Calu3 (cell line): ENCODE measurements at regions of chr1 and their contacts with region 1.

Region 1: GRCh38 chr1:53945433-53946251 is at the start of gene IFT25:
- DNase-seq: peak; percentile 98
- H3K4me3 Mint-ChIP-seq: peak within 1 kb of the TSS; percentile 98
- H3K27ac Mint-ChIP-seq: peak within 1 kb of the TSS; percentile 80
- H3K4me1 Mint-ChIP-seq: peaks cover 23% of the 10 kb centered on the region
- H3K27me3 Mint-ChIP-seq: no peaks in the 10 kb centered on the region
- CTCF ChIP-seq: no peak
- total RNA-seq, gene IFT25: 25.8 and 30.0 TPM in 2 replicates

Region 2: DNA sequence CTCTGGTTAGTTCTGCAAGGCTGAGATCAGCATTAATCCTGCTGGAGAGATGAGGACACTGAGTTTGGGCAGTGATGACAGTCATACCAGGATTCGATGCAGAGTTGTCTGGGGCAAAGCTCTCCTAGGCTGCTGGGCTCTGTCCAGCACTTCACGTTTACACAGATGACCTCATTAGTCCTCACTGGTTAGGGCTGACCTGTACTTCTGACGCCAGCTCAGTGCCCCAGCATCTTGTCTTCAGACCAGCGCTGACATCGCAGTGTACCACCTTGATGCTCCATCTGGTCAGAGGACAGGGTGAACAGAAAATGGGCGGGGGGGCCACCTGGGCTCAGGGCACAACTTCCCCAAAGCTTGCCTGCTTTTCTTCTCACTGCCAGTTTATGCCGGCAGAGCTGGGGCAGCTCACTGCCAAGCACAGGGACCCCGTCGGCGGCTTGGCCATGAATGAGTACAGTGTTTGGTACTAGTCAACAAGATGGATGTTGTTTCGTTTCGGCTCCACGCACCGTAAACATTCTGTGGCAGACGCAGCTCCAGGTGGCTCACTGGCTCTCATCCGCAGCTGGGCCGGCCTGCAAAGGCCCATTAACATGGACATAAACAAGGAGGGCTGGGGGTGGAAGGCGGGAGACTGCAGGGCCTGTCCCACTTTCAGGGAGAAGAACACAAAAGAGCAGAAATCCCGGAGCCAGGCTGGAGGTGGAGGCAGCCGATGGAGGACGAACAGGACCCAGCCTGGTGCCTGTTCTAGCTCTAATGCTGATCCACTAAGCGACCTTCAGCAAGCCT is 325.4 kb before region 1 on chr1:
- CTCF ChIA-PET with region 1: no interaction called
- intact Hi-C with region 1: no loop called
- DNase-seq: no peak
- H3K4me3 Mint-ChIP-seq: no peak overlapping the region
- H3K27ac Mint-ChIP-seq: no peak overlapping the region
- H3K4me1 Mint-ChIP-seq: no peaks in the 10 kb centered on the region
- H3K27me3 Mint-ChIP-seq: peaks cover 40% of the 10 kb centered on the region
- CTCF ChIP-seq: no peak

Region 3: GRCh38 chr1:53860967-53861411 is 84.7 kb before region 1 on chr1:
- CTCF ChIA-PET with region 1: interaction called, 5 read pairs
- intact Hi-C with region 1: loop called (anchors 1 kb)
- DNase-seq: peak; percentile 45
- H3K4me3 Mint-ChIP-seq: no peak overlapping the region
- H3K27ac Mint-ChIP-seq: no peak overlapping the region
- H3K4me1 Mint-ChIP-seq: no peaks in the 10 kb centered on the region
- H3K27me3 Mint-ChIP-seq: no peaks in the 10 kb centered on the region
- CTCF ChIP-seq: peak; percentile 75

Region 4: GRCh38 chr1:53878492-53879105 is 67.0 kb before region 1 on chr1:
- CTCF ChIA-PET with region 1: interaction called, 6 read pairs
- intact Hi-C with region 1: loop called (anchors 1 kb)
- DNase-seq: no peak
- H3K4me3 Mint-ChIP-seq: no peak overlapping the region
- H3K27ac Mint-ChIP-seq: no peak overlapping the region
- H3K4me1 Mint-ChIP-seq: no peaks in the 10 kb centered on the region
- H3K27me3 Mint-ChIP-seq: no peaks in the 10 kb centered on the region
- CTCF ChIP-seq: peak; percentile 46

Region 5: GRCh38 chr1:53959664-53960250 is 14.1 kb after region 1 on chr1:
- CTCF ChIA-PET with region 1: interaction called, 22 read pairs
- intact Hi-C with region 1: no loop called
- DNase-seq: peak; percentile 26
- H3K4me3 Mint-ChIP-seq: no peak overlapping the region
- H3K27ac Mint-ChIP-seq: no peak overlapping the region
- H3K4me1 Mint-ChIP-seq: peaks cover 13% of the 10 kb centered on the region
- H3K27me3 Mint-ChIP-seq: no peaks in the 10 kb centered on the region
- CTCF ChIP-seq: peak; percentile 71

Region 6: GRCh38 chr1:53992085-53992874 is 46.6 kb after region 1 on chr1:
- CTCF ChIA-PET with region 1: no interaction called
- intact Hi-C with region 1: no loop called
- DNase-seq: no peak
- H3K4me3 Mint-ChIP-seq: no peak overlapping the region
- H3K27ac Mint-ChIP-seq: no peak overlapping the region
- H3K4me1 Mint-ChIP-seq: no peaks in the 10 kb centered on the region
- H3K27me3 Mint-ChIP-seq: no peaks in the 10 kb centered on the region
- CTCF ChIP-seq: no peak